Activated B cell treated with CpG ODN at 0.5 μM for 24 hours (primary cell): ENCODE measurements at regions of chr5 and their contacts with region 1.

Region 1: DNA sequence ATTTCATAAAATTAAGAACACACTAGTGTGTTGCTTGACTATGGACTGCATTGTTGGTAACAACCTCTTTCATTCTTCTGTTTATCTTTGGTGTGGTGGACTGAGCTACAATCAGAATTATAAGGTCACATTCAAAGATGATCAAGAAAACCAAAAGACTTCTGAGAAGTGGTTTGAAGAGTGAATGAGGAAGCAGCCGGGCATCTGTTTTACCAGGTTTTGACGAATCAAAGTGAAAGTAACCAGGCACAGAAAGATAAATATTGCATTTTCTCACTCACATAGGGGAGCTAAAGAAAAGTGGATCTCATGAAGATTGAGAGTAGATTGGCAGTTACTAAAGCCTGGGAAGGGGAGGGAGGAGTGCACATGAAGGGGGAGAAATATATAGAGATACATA is 589.1 kb downstream of the ZNF608 start:
- DNase-seq: no peak
- ATAC-seq: peak; percentile 61
- H3K4me3 Mint-ChIP-seq: peak overlapping the region; percentile 84
- H3K27ac Mint-ChIP-seq: peak overlapping the region; percentile 89
- H3K4me1 Mint-ChIP-seq: peaks cover 52% of the 10 kb centered on the region
- H3K27me3 Mint-ChIP-seq: no peaks in the 10 kb centered on the region
- CTCF ChIP-seq: no peak

Region 2: GRCh38 chr5:124079062-124079461 is 78.3 kb before region 1 on chr5:
- CTCF ChIA-PET with region 1: no interaction called
- POLR2A ChIA-PET with region 1: no interaction called
- intact Hi-C with region 1: loop called (anchors 5 kb)
- DNase-seq: no peak
- ATAC-seq: no peak
- H3K4me3 Mint-ChIP-seq: no peak overlapping the region
- H3K27ac Mint-ChIP-seq: no peak overlapping the region
- H3K4me1 Mint-ChIP-seq: peaks cover 30% of the 10 kb centered on the region
- H3K27me3 Mint-ChIP-seq: no peaks in the 10 kb centered on the region
- CTCF ChIP-seq: no peak

Region 3: GRCh38 chr5:124436294-124436693 is 279.0 kb after region 1 on chr5:
- CTCF ChIA-PET with region 1: no interaction called
- POLR2A ChIA-PET with region 1: no interaction called
- intact Hi-C with region 1: no loop called
- DNase-seq: no peak
- ATAC-seq: no peak
- H3K4me3 Mint-ChIP-seq: no peak overlapping the region
- H3K27ac Mint-ChIP-seq: no peak overlapping the region
- H3K4me1 Mint-ChIP-seq: peaks cover 11% of the 10 kb centered on the region
- H3K27me3 Mint-ChIP-seq: no peaks in the 10 kb centered on the region
- CTCF ChIP-seq: no peak

Region 4: GRCh38 chr5:125117566-125117965 is 960.2 kb after region 1 on chr5:
- CTCF ChIA-PET with region 1: no interaction called
- POLR2A ChIA-PET with region 1: no interaction called
- intact Hi-C with region 1: no loop called
- DNase-seq: no peak
- ATAC-seq: no peak
- H3K4me3 Mint-ChIP-seq: no peak overlapping the region
- H3K27ac Mint-ChIP-seq: no peak overlapping the region
- H3K4me1 Mint-ChIP-seq: peaks cover 6% of the 10 kb centered on the region
- H3K27me3 Mint-ChIP-seq: no peaks in the 10 kb centered on the region
- CTCF ChIP-seq: no peak

Region 5: GRCh38 chr5:126066836-126067235 is 1909.5 kb after region 1 on chr5:
- CTCF ChIA-PET with region 1: no interaction called
- POLR2A ChIA-PET with region 1: no interaction called
- intact Hi-C with region 1: no loop called
- DNase-seq: no peak
- ATAC-seq: no peak
- H3K4me3 Mint-ChIP-seq: no peak overlapping the region
- H3K27ac Mint-ChIP-seq: no peak overlapping the region
- H3K4me1 Mint-ChIP-seq: no peaks in the 10 kb centered on the region
- H3K27me3 Mint-ChIP-seq: peaks cover 7% of the 10 kb centered on the region
- CTCF ChIP-seq: no peak